ENCODE measurements at regions of chr2 and their contacts with region 1.

Region 1: GRCh38 chr2:208265801-208266552 is at the start of gene PIKFYVE:
- DNase-seq: peak; percentile 97 to 98
- ATAC-seq: peak; percentile 99
- H3K4me3 ChIP-seq: peak within 1 kb of the TSS; percentile 49 to 96
- H3K27ac ChIP-seq: peak within 1 kb of the TSS; percentile 68 to 69
- H3K4me1 ChIP-seq: no peaks in the 10 kb centered on the region
- H3K27me3 ChIP-seq: no peaks in the 10 kb centered on the region
- total RNA-seq, gene PIKFYVE: 31.9 to 42.6 TPM

Region 2: DNA sequence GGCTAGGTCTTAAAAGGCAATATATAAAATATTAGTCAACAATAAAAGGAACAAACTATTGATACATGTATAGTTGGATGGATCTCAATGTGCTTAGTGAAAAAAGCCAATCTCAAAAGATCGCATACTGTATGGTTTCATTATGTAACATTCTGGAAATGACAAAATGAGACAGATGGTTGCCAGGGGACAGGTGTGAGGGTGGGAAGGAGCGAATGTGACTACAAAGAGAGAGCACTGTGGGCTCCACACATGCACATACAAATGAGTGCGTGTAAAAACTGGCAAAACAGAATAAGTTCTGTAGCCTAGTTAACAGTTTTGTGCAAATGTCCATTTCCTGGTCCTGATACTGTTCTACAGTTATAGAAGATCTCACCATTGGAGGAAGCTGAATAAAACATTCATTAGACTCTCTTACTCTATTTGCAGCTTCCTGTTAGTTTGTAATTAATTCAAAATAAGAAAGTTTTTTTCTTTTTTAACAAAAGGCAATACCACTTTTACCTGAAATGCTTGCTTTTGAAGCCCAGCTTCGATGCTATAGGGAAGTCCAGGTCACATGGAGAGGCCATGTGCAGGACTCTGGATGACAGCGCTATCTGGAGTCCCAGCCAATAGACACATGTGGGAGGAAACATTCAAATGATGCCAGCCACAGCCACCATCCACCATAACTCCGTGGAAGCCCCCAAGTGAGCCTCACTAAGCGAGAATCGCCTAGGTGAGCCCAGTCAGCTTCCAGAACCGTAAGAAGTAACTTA is 55.1 kb before region 1 on chr2:
- intact Hi-C with region 1: no loop called
- DNase-seq: no peak
- ATAC-seq: no peak
- H3K4me3 ChIP-seq: no peak overlapping the region
- H3K27ac ChIP-seq: no peak overlapping the region
- H3K4me1 ChIP-seq: no peaks in the 10 kb centered on the region
- H3K27me3 ChIP-seq: no peaks in the 10 kb centered on the region

Region 3: GRCh38 chr2:208320686-208321085 is 54.7 kb after region 1 on chr2:
- intact Hi-C with region 1: loop called in 1 of 2 experiments (anchors 5 kb)
- DNase-seq: peak; percentile 85 to 86
- ATAC-seq: peak; percentile 93
- H3K4me3 ChIP-seq: no peak overlapping the region
- H3K27ac ChIP-seq: peak overlapping the region in 1 of 2 donors; percentile 4
- H3K4me1 ChIP-seq: no peaks in the 10 kb centered on the region
- H3K27me3 ChIP-seq: no peaks in the 10 kb centered on the region

Region 4: GRCh38 chr2:208334230-208334629 is 68.3 kb after region 1 on chr2:
- intact Hi-C with region 1: no loop called
- DNase-seq: peak in 1 of 2 donors; percentile 50
- ATAC-seq: no peak
- H3K4me3 ChIP-seq: no peak overlapping the region
- H3K27ac ChIP-seq: no peak overlapping the region
- H3K4me1 ChIP-seq: no peaks in the 10 kb centered on the region
- H3K27me3 ChIP-seq: no peaks in the 10 kb centered on the region